Posterior vena cava (tissue), 2 donors: ENCODE measurements at regions of chr1 and their contacts with region 1.

Region 1: DNA sequence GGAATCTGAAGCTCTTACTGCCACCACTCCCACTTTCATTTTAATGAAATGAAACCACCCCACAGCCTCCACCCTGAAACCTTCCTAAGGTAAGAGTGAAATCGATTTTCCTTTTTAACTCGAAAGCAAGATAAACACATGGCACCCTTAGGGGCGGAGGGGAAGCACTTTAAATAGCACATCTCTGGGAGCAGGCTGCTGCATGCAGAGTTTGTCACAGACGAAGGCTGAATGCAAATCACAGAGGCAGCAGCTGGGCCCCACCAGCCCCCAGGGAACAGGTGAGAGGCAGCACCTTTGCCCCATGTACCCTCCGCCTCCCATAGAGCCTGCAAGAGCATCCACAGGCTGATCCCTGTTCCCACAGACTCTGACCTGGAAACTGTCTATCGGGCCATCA is 60.0 kb upstream of the GRIK3 start:
- DNase-seq: no peak

Region 2: GRCh38 chr1:36864182-36864822 is 230.0 kb before region 1 on chr1:
- intact Hi-C with region 1: no loop called
- DNase-seq: no peak

Region 3: GRCh38 chr1:37282764-37283163 is 188.5 kb after region 1 on chr1:
- intact Hi-C with region 1: no loop called
- DNase-seq: no peak

Region 4: GRCh38 chr1:38191461-38191860 is 1097.2 kb after region 1 on chr1:
- intact Hi-C with region 1: loop called in 1 of 2 experiments (anchors 5 kb)
- DNase-seq: no peak